Activated B cell treated with CpG ODN at 0.5 μM for 24 hours (primary cell): ENCODE measurements at regions of chr16 and their contacts with region 1.

Region 1: DNA sequence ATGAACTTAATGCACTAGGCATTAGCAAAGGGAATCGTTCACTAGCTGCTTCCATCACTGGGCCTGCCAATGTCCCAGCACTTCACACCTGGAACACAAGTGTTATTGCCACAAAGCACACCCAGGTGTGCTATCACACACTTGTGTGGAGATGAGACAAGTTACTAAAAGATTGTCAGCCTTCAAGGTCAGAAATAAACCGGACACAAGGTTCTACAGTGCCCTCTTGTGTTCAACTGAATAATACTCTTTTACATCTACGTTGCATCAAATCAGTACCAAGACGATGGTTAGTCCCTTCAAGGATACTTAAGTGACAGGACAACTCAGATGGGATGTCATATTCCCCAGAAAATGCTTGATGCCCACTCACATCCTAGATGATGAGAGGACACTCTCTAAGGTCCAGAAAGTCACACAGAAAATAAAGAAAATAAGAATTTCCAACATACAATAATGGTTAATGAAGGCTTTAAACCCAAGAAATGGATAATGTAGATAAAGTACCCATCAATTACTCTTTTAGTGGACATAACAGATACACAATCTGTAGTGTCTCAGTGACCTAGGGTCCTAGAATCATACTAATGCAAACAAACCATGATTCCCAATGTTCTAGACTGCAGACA is 16.4 kb upstream of the GLG1 start:
- DNase-seq: no peak
- ATAC-seq: peak; percentile 50
- H3K4me3 Mint-ChIP-seq: no peak overlapping the region
- H3K27ac Mint-ChIP-seq: no peak overlapping the region
- H3K4me1 Mint-ChIP-seq: peaks cover 8% of the 10 kb centered on the region
- H3K27me3 Mint-ChIP-seq: no peaks in the 10 kb centered on the region
- CTCF ChIP-seq: no peak

Region 2: GRCh38 chr16:74309789-74310781 is 313.2 kb before region 1 on chr16:
- CTCF ChIA-PET with region 1: interaction called, 4 read pairs
- POLR2A ChIA-PET with region 1: no interaction called
- intact Hi-C with region 1: loop called (anchors 1 kb)
- DNase-seq: no peak
- ATAC-seq: no peak
- H3K4me3 Mint-ChIP-seq: no peak overlapping the region
- H3K27ac Mint-ChIP-seq: no peak overlapping the region
- H3K4me1 Mint-ChIP-seq: no peaks in the 10 kb centered on the region
- H3K27me3 Mint-ChIP-seq: no peaks in the 10 kb centered on the region
- CTCF ChIP-seq: peak; percentile 34

Region 3: DNA sequence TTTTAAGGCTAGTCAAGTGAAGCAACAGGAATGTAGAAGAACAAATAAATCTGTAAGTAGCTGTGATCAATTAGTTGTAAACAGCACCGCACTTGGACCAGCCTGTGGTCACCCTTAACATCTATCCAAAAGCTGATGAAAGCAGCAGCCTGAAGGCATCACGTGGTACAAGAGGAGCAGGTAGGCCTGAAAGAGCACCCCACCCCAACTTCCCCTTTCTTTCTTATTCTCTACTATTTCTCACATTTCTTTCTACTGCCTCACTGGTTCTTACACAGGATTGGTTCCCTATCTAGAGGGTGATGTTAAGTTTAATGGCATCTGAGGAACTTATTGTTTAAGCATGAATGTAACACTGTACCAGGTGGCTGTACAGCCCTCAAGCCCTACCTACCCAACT is 159.4 kb before region 1 on chr16:
- CTCF ChIA-PET with region 1: no interaction called
- POLR2A ChIA-PET with region 1: no interaction called
- intact Hi-C with region 1: loop called (anchors 5 kb)
- DNase-seq: no peak
- ATAC-seq: peak; percentile 98
- H3K4me3 Mint-ChIP-seq: no peak overlapping the region
- H3K27ac Mint-ChIP-seq: peak overlapping the region; percentile 76
- H3K4me1 Mint-ChIP-seq: peaks cover 16% of the 10 kb centered on the region
- H3K27me3 Mint-ChIP-seq: no peaks in the 10 kb centered on the region
- CTCF ChIP-seq: no peak

Region 4: GRCh38 chr16:74501484-74502479 is 121.5 kb before region 1 on chr16:
- CTCF ChIA-PET with region 1: interaction called, 5 read pairs
- POLR2A ChIA-PET with region 1: no interaction called
- intact Hi-C with region 1: loop called (anchors 10 kb)
- DNase-seq: no peak
- ATAC-seq: no peak
- H3K4me3 Mint-ChIP-seq: no peak overlapping the region
- H3K27ac Mint-ChIP-seq: no peak overlapping the region
- H3K4me1 Mint-ChIP-seq: no peaks in the 10 kb centered on the region
- H3K27me3 Mint-ChIP-seq: no peaks in the 10 kb centered on the region
- CTCF ChIP-seq: no peak